Naive thymus-derived CD4-positive, alpha-beta T cell (primary cell): ENCODE measurements at regions of chr1 and their contacts with region 1.

Region 1: DNA sequence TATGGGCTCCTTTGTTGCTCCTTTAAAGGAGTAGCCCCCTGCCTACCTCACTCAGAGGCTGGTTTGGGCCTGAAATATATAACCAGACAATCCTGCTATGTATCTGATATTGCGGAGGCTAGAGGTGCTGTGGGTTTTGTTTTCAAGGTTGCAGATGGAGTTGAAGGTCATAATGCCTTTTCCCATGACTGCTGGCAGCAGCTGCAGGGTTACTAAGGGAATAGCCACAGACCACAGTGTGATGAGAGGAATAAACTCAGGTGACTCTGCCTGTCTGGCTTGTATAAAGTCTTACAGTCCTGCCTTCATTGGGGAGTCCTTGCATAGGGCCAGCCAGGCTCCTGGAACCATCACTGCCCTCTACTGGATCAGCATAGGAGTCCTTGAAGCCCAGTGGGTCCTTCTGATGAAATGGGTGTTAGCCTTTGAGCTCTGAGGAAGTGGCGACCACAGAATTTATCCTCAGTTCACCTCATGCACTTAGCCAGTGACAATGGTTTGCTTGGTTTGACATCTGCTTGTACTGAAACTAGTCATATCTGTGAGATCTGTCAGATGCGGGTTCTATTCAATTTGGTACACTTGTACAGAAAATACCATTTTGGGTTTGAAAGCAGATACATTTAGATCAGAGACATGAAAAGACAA is 174.4 kb upstream of the HMCN1 start:
- DNase-seq: peak in 8 of 9 donors; percentile 9 to 57 (median 18)
- ATAC-seq: peak; percentile 91
- H3K4me3 ChIP-seq: no peak overlapping the region
- H3K4me3 Mint-ChIP-seq: peak overlapping the region in 8 of 10 donors; percentile 46 to 70 (median 58)
- H3K27ac ChIP-seq: no peak overlapping the region
- H3K27ac Mint-ChIP-seq: peak overlapping the region; percentile 63 to 91 (median 81)
- H3K4me1 ChIP-seq: peaks cover 26 to 35% of the 10 kb centered on the region in 2 donors
- H3K4me1 Mint-ChIP-seq: peaks cover 36 to 53% (median 48%) of the 10 kb centered on the region in 7 donors
- H3K27me3 ChIP-seq: no peaks in the 10 kb centered on the region
- H3K27me3 Mint-ChIP-seq: no peaks in the 10 kb centered on the region

Region 2: DNA sequence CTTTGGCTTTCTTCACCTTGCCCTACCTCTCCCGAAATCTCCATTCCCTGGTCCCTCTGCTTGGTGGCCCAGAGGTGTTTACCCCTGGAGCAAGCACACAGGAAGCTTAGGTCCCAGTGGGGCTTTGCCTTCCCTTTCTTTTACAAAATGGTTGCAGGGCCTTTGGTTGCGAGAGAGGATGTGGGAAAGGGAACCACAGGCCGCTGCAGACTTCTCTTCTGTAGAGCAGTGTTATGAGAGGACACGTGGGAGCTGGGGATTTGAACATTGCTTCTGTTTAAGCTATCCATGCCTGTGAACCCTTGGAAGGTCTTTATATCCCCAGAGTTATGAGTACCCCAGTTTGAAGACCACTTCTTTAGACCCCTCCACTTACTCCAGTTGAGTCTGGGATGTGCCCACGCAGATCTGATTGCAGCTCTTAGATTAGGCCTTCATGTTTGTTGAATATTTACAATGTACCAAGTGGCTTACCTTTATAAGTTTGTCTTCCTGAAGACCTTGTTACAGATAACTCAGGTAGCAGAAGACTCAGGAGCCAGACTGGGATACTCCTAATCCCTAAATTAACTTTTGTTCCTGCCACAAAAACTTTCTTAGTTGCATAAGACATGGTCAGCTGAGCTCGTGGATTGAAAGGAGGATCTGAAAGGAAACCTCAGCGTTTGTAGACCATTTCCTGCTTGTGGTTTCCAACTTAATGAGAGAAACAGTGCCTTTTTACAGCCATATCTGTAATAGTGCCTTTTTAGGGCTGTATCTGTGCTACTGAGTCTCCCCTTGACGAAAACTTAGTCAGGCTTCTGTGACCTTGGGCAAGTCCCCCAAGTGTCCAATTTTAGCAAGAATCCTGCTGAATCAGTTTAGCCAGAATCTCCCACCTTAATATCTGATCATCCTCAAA is 220.8 kb before region 1 on chr1:
- CTCF ChIA-PET with region 1: no interaction called
- POLR2A ChIA-PET with region 1: no interaction called
- intact Hi-C with region 1: loop called in 1 of 2 experiments (anchors 2 kb)
- DNase-seq: peak in 8 of 9 donors; percentile 26 to 61 (median 53)
- ATAC-seq: peak; percentile 89
- H3K4me3 ChIP-seq: peak overlapping the region; percentile 2
- H3K4me3 Mint-ChIP-seq: peak overlapping the region; percentile 37 to 79 (median 61)
- H3K27ac ChIP-seq: peak overlapping the region; percentile 0
- H3K27ac Mint-ChIP-seq: peak overlapping the region; percentile 68 to 92 (median 80)
- H3K4me1 ChIP-seq: peaks cover 25 to 27% of the 10 kb centered on the region in 2 donors
- H3K4me1 Mint-ChIP-seq: peaks cover 20 to 47% (median 43%) of the 10 kb centered on the region in 7 donors
- H3K27me3 ChIP-seq: no peaks in the 10 kb centered on the region
- H3K27me3 Mint-ChIP-seq: peaks cover 0 to 3% (median 0%) of the 10 kb centered on the region in 5 donors

Region 3: GRCh38 chr1:185420588-185421081 is 139.2 kb before region 1 on chr1:
- CTCF ChIA-PET with region 1: no interaction called
- POLR2A ChIA-PET with region 1: no interaction called
- intact Hi-C with region 1: loop called in 1 of 2 experiments (anchors 1 kb)
- DNase-seq: no peak
- ATAC-seq: peak; percentile 90
- H3K4me3 ChIP-seq: no peak overlapping the region
- H3K4me3 Mint-ChIP-seq: peak overlapping the region in 1 of 10 donors; percentile 71
- H3K27ac ChIP-seq: no peak overlapping the region
- H3K27ac Mint-ChIP-seq: peak overlapping the region in 3 of 9 donors; percentile 9 to 95 (median 42)
- H3K4me1 ChIP-seq: peaks cover 0 to 21% of the 10 kb centered on the region in 2 donors
- H3K4me1 Mint-ChIP-seq: peaks cover 0 to 69% (median 3%) of the 10 kb centered on the region in 7 donors
- H3K27me3 ChIP-seq: no peaks in the 10 kb centered on the region
- H3K27me3 Mint-ChIP-seq: no peaks in the 10 kb centered on the region

Region 4: GRCh38 chr1:185439727-185440415 is 119.9 kb before region 1 on chr1:
- CTCF ChIA-PET with region 1: no interaction called
- POLR2A ChIA-PET with region 1: no interaction called
- intact Hi-C with region 1: loop called in 1 of 2 experiments (anchors 1 kb)
- DNase-seq: peak in 1 of 9 donors; percentile 34
- ATAC-seq: peak; percentile 80
- H3K4me3 ChIP-seq: no peak overlapping the region
- H3K4me3 Mint-ChIP-seq: no peak overlapping the region
- H3K27ac ChIP-seq: no peak overlapping the region
- H3K27ac Mint-ChIP-seq: no peak overlapping the region
- H3K4me1 ChIP-seq: peaks cover 0 to 20% of the 10 kb centered on the region in 2 donors
- H3K4me1 Mint-ChIP-seq: peaks cover 0 to 36% (median 3%) of the 10 kb centered on the region in 7 donors
- H3K27me3 ChIP-seq: no peaks in the 10 kb centered on the region
- H3K27me3 Mint-ChIP-seq: no peaks in the 10 kb centered on the region

Region 5: GRCh38 chr1:185517808-185518419 is 41.9 kb before region 1 on chr1:
- CTCF ChIA-PET with region 1: interaction called, 3 read pairs
- POLR2A ChIA-PET with region 1: no interaction called
- intact Hi-C with region 1: loop called in 1 of 2 experiments (anchors 5 kb)
- DNase-seq: no peak
- ATAC-seq: no peak
- H3K4me3 ChIP-seq: no peak overlapping the region
- H3K4me3 Mint-ChIP-seq: no peak overlapping the region
- H3K27ac ChIP-seq: no peak overlapping the region
- H3K27ac Mint-ChIP-seq: no peak overlapping the region
- H3K4me1 ChIP-seq: no peaks in the 10 kb centered on the region
- H3K4me1 Mint-ChIP-seq: peaks cover 0 to 11% (median 0%) of the 10 kb centered on the region in 7 donors
- H3K27me3 ChIP-seq: no peaks in the 10 kb centered on the region
- H3K27me3 Mint-ChIP-seq: peaks cover 0 to 3% (median 0%) of the 10 kb centered on the region in 5 donors

Region 6: DNA sequence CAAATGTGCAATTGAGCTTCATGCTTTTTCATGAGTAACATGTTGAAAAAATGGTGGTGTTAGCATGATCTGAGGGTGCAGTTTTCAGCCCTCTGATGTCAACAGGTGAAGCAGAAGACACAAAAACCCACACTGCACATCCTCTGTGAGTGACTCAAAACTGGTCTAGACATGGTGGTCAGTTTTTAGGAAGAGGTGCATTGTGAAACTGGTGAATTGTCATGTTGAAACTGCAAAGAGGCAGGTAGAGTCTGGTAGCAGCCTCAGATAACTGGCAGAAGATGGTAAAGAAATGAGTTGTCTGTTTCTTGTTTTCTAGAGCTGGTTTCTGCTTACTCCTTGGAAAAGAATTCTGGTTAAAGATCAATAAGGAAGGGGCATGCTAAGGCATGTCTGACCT is 77.0 kb after region 1 on chr1:
- CTCF ChIA-PET with region 1: no interaction called
- POLR2A ChIA-PET with region 1: no interaction called
- intact Hi-C with region 1: loop called in 1 of 2 experiments (anchors 2 kb)
- DNase-seq: peak in 1 of 9 donors; percentile 32
- ATAC-seq: peak; percentile 46
- H3K4me3 ChIP-seq: no peak overlapping the region
- H3K4me3 Mint-ChIP-seq: peak overlapping the region in 1 of 10 donors; percentile 50
- H3K27ac ChIP-seq: no peak overlapping the region
- H3K27ac Mint-ChIP-seq: peak overlapping the region in 1 of 9 donors; percentile 83
- H3K4me1 ChIP-seq: no peaks in the 10 kb centered on the region
- H3K4me1 Mint-ChIP-seq: peaks cover 0 to 21% (median 0%) of the 10 kb centered on the region in 7 donors
- H3K27me3 ChIP-seq: no peaks in the 10 kb centered on the region
- H3K27me3 Mint-ChIP-seq: peaks cover 0 to 6% (median 0%) of the 10 kb centered on the region in 5 donors

Region 7: DNA sequence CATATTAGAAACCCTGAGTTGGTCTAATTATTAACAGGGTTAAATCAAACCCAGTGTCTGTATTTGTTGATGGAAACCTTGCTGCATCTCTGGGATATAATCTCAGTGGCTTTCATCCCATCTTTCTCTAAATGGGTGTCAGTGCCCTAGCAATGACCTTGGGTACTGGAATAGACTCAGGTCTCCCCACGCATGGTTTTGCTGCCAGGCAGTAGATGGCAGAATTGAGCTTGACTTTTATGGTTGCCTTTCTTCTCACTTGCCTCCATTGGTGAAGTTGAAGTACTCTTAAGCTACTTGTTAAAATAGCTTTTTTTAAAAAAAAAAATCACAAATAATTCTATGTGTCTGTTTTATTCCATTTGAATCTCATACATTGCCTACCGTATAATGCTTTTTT is 92.5 kb after region 1 on chr1:
- CTCF ChIA-PET with region 1: no interaction called
- POLR2A ChIA-PET with region 1: no interaction called
- intact Hi-C with region 1: no loop called
- DNase-seq: no peak
- ATAC-seq: no peak
- H3K4me3 ChIP-seq: no peak overlapping the region
- H3K4me3 Mint-ChIP-seq: no peak overlapping the region
- H3K27ac ChIP-seq: no peak overlapping the region
- H3K27ac Mint-ChIP-seq: peak overlapping the region in 2 of 9 donors; percentile 3 to 48
- H3K4me1 ChIP-seq: peaks cover 0 to 1% of the 10 kb centered on the region in 2 donors
- H3K4me1 Mint-ChIP-seq: peaks cover 7 to 21% (median 17%) of the 10 kb centered on the region in 7 donors
- H3K27me3 ChIP-seq: no peaks in the 10 kb centered on the region
- H3K27me3 Mint-ChIP-seq: no peaks in the 10 kb centered on the region